IMR-90 (cell line): ENCODE measurements at regions of chr4 and their contacts with region 1.

Region 1: DNA sequence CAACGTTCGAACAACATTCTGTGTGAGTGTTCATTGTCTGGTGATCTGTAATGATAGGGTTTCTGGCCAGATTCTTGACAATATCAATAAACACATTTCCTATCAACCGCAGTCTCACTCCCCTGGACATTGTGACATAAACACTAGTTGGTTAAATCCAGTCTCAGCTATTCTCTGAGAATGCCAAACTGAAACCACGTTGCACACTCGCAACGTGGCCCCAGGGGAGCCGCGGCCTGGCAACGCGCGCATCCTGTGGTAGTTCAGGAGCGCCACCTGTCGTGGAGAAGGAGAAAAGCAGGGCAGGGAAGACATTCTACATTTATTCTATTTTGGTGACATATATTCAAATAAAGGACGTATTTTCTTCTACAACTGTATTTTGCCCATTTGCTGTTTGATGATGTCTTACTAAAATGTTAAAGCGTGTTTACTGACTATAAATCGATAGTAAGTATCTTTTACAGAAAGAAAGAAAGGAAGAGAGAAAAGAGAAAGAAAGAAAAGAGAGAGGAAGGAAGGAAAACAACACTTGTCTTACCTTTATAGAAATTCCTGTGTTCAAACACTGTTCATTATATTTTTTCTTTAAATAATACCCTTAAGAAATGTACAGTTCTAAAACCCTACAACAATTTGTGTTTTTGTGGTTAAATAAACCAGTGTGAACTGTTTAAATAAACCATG is 738.3 kb upstream of the FRG1 start:
- DNase-seq: peak; percentile 92
- ATAC-seq: peak; percentile 94
- H3K4me3 ChIP-seq: peak overlapping the region; percentile 37; the same call in 1 of the 2 replicates
- H3K27ac ChIP-seq: peak overlapping the region; percentile 96
- H3K4me1 ChIP-seq: peaks cover 4% of the 10 kb centered on the region
- H3K27me3 ChIP-seq: no peaks in the 10 kb centered on the region
- CTCF ChIP-seq: peak; percentile 95
- POLR2A ChIP-seq: no peak
- RAD21 ChIP-seq: peak; percentile 90

Region 2: GRCh38 chr4:187606581-187606980 is 1595.7 kb before region 1 on chr4:
- CTCF ChIA-PET with region 1: no interaction called
- POLR2A ChIA-PET with region 1: no interaction called
- dilution Hi-C with region 1: no loop called
- in situ Hi-C with region 1: no loop called
- intact Hi-C with region 1: loop called (anchors 2 kb)
- DNase-seq: peak; percentile 69
- ATAC-seq: peak; percentile 64
- H3K4me3 ChIP-seq: no peak overlapping the region
- H3K27ac ChIP-seq: peak overlapping the region; percentile 55; the same call in 1 of the 2 replicates
- H3K4me1 ChIP-seq: peaks cover 11% of the 10 kb centered on the region
- H3K27me3 ChIP-seq: no peaks in the 10 kb centered on the region
- CTCF ChIP-seq: peak; percentile 86
- POLR2A ChIP-seq: no peak
- RAD21 ChIP-seq: peak; percentile 90

Region 3: DNA sequence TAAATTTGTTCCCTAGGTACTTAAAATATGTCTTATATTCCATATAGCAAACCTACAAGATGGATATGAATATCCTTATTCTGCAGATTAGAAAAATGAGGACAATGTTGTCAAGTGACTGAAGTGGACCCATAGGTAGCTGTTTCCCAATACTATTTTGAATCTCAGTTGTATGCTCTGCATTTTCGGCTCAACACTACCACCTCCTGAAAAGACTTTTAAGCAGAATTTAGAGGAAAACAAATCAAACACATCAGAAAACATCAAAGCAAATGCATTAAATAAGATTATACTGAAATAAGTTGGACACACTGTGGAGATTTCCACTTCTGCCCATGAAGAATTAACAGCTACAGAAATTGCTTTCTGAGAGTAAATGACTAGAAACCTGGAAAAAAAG is 574.4 kb before region 1 on chr4:
- CTCF ChIA-PET with region 1: no interaction called
- POLR2A ChIA-PET with region 1: no interaction called
- dilution Hi-C with region 1: no loop called
- in situ Hi-C with region 1: no loop called
- intact Hi-C with region 1: loop called (anchors 10 kb)
- DNase-seq: no peak
- ATAC-seq: no peak
- H3K4me3 ChIP-seq: no peak overlapping the region
- H3K27ac ChIP-seq: no peak overlapping the region
- H3K4me1 ChIP-seq: no peaks in the 10 kb centered on the region
- H3K27me3 ChIP-seq: no peaks in the 10 kb centered on the region
- CTCF ChIP-seq: no peak
- POLR2A ChIP-seq: no peak
- RAD21 ChIP-seq: no peak

Region 4: GRCh38 chr4:188781655-188782054 is 420.7 kb before region 1 on chr4:
- CTCF ChIA-PET with region 1: no interaction called
- POLR2A ChIA-PET with region 1: no interaction called
- dilution Hi-C with region 1: no loop called
- in situ Hi-C with region 1: no loop called
- intact Hi-C with region 1: loop called (anchors 10 kb)
- DNase-seq: peak; percentile 16
- ATAC-seq: peak; percentile 33; the same call in 1 of the 2 replicates
- H3K4me3 ChIP-seq: no peak overlapping the region
- H3K27ac ChIP-seq: no peak overlapping the region
- H3K4me1 ChIP-seq: peaks cover 5% of the 10 kb centered on the region; the same call in 1 of the 2 replicates
- H3K27me3 ChIP-seq: no peaks in the 10 kb centered on the region
- CTCF ChIP-seq: peak; percentile 37
- POLR2A ChIP-seq: no peak
- RAD21 ChIP-seq: 0 out of 2 replicates have a peak, but pooled peaks have one; percentile 14

Region 5: GRCh38 chr4:189050643-189051042 is 151.7 kb before region 1 on chr4:
- CTCF ChIA-PET with region 1: no interaction called
- POLR2A ChIA-PET with region 1: no interaction called
- dilution Hi-C with region 1: no loop called
- in situ Hi-C with region 1: no loop called
- intact Hi-C with region 1: no loop called
- DNase-seq: no peak
- ATAC-seq: no peak
- H3K4me3 ChIP-seq: no peak overlapping the region
- H3K27ac ChIP-seq: no peak overlapping the region
- H3K4me1 ChIP-seq: no peaks in the 10 kb centered on the region
- H3K27me3 ChIP-seq: no peaks in the 10 kb centered on the region
- CTCF ChIP-seq: no peak
- POLR2A ChIP-seq: no peak
- RAD21 ChIP-seq: no peak

Region 6: GRCh38 chr4:189124149-189124758 is 78.1 kb before region 1 on chr4:
- CTCF ChIA-PET with region 1: interaction called, 3 read pairs
- POLR2A ChIA-PET with region 1: no interaction called
- dilution Hi-C with region 1: no loop called
- in situ Hi-C with region 1: no loop called
- intact Hi-C with region 1: loop called (anchors 1 kb)
- DNase-seq: peak; percentile 74
- ATAC-seq: peak; percentile 85
- H3K4me3 ChIP-seq: no peak overlapping the region
- H3K27ac ChIP-seq: peak overlapping the region; percentile 43; the same call in 1 of the 2 replicates
- H3K4me1 ChIP-seq: peaks cover 1% of the 10 kb centered on the region; the same call in 1 of the 2 replicates
- H3K27me3 ChIP-seq: no peaks in the 10 kb centered on the region
- CTCF ChIP-seq: peak; percentile 91
- POLR2A ChIP-seq: no peak
- RAD21 ChIP-seq: peak; percentile 97

Region 7: GRCh38 chr4:189802884-189803283 is 600.6 kb after region 1 on chr4:
- CTCF ChIA-PET with region 1: no interaction called
- POLR2A ChIA-PET with region 1: no interaction called
- dilution Hi-C with region 1: no loop called
- in situ Hi-C with region 1: no loop called
- intact Hi-C with region 1: no loop called
- DNase-seq: no peak
- ATAC-seq: no peak
- H3K4me3 ChIP-seq: no peak overlapping the region
- H3K27ac ChIP-seq: no peak overlapping the region
- H3K4me1 ChIP-seq: no peaks in the 10 kb centered on the region
- H3K27me3 ChIP-seq: no peaks in the 10 kb centered on the region
- CTCF ChIP-seq: 0 out of 2 replicates have a peak, but pooled peaks have one; percentile 2
- POLR2A ChIP-seq: no peak
- RAD21 ChIP-seq: no peak

Region 8: DNA sequence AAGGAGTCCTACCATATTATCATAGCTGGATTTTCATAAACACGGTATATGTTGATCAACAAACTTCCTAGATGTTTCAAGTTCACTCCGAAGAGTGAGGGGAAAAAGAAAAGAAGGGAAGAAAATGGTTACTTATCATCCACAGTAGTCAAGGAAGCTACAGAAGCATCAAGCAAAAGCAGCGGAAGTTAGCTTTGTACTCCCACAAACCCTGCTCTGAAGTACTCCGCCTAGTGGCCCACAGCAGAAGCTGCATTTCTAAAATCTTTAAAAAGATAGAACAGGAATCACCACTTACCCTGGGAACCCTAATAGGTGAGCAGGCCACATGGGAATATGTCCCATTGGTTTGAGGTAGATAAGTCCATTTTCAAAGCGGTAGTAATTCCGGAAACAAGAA is 709.8 kb after region 1 on chr4:
- CTCF ChIA-PET with region 1: no interaction called
- POLR2A ChIA-PET with region 1: no interaction called
- dilution Hi-C with region 1: no loop called
- in situ Hi-C with region 1: no loop called
- intact Hi-C with region 1: loop called (anchors 10 kb)
- DNase-seq: no peak
- ATAC-seq: no peak
- H3K4me3 ChIP-seq: no peak overlapping the region
- H3K27ac ChIP-seq: no peak overlapping the region
- H3K4me1 ChIP-seq: no peaks in the 10 kb centered on the region
- H3K27me3 ChIP-seq: no peaks in the 10 kb centered on the region
- CTCF ChIP-seq: peak; percentile 29
- POLR2A ChIP-seq: no peak
- RAD21 ChIP-seq: no peak